AG04450 (cell line): ENCODE measurements at regions of chr4 and their contacts with region 1.

Region 1: GRCh38 chr4:77819843-77820648 is 878 bp upstream of the CNOT6L start:
- DNase-seq: no peak
- H3K4me3 ChIP-seq: peak overlapping the region; percentile 93
- H3K27ac ChIP-seq: peak overlapping the region; percentile 92
- H3K27me3 ChIP-seq: no peaks in the 10 kb centered on the region
- CTCF ChIP-seq: no peak

Region 2: DNA sequence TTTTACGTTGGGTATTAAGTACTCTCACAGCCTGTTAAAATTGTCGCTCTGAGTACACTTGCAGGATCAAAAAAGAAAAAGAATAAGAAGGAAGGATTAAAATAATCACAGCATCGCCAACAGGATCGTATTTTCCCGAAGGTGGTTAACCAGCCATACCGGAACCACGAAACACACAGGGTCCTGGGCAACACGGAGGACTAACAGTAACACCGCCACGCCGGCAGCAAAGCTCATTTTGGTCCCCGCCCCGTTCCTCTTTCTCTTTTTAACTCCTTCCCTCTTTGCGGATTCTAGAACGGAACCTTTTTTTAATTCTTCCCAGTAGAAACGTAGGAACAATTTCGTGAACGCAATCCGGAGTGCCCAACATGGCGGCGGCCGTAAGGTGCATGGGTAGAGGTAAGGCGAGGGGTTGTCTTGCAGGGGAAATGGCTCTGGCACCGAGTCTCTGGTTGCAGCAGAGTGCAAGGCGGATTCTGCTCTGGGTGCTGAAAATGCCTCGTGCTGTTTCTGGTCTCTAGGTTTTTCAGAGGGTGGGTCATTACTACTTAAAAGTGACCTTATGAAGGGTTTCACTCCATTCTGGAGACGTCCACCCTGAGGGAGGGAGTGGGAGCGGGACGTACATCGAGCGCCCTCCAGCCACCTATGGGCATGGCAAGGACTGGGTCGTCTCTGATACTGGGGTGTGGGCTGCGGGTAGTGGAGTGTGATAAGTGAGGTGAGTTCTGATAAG is 42.6 kb after region 1 on chr4 and contains the start of gene MRPL1:
- CTCF ChIA-PET with region 1: interaction called, 8 read pairs
- POLR2A ChIA-PET with region 1: interaction called, 20 read pairs
- DNase-seq: peak; percentile 88
- H3K4me3 ChIP-seq: peak within 1 kb of the TSS; percentile 93
- H3K27ac ChIP-seq: peak within 1 kb of the TSS; percentile 98
- H3K27me3 ChIP-seq: no peaks in the 10 kb centered on the region
- CTCF ChIP-seq: no peak
- polyA plus RNA-seq, gene MRPL1: 30.9 and 49.9 TPM in 2 replicates

Region 3: DNA sequence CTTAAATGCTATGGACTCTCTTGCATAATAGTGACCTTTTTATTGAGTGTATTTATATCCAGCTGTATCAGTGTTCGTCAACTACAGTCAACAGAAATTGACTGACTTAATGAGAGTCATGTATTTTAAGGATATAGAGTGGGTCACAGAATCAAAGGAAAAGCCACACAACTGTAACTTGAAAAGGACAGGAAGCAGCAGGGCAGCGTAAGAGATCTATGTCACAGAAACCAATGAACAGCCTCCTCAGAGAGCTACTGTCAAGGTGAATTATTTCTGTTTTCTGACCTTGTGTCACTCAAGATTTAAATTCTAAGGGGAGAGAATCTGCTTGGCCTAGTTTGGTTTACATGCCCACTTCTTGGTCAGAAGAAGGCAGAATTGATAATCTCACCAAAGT is 143.0 kb after region 1 on chr4:
- CTCF ChIA-PET with region 1: no interaction called
- POLR2A ChIA-PET with region 1: no interaction called
- DNase-seq: no peak
- H3K4me3 ChIP-seq: no peak overlapping the region
- H3K27ac ChIP-seq: no peak overlapping the region
- H3K27me3 ChIP-seq: no peaks in the 10 kb centered on the region
- CTCF ChIP-seq: no peak